Activated naive CD4-positive, alpha-beta T cell treated with anti-CD3 and anti-CD28 coated beads, Interleukin-2, amount 10 ng/mL, durations not matched to agents 7 days and 5 days (primary cell): ENCODE measurements at regions of chr11 and their contacts with region 1.

Region 1: GRCh38 chr11:64864473-64865285 is 13.7 kb downstream of the EHD1 start:
- DNase-seq: no peak
- H3K4me3 Mint-ChIP-seq: peak overlapping the region; percentile 56
- H3K27ac Mint-ChIP-seq: peak overlapping the region; percentile 100
- H3K4me1 Mint-ChIP-seq: peaks cover 94% of the 10 kb centered on the region
- H3K27me3 Mint-ChIP-seq: no peaks in the 10 kb centered on the region

Region 2: DNA sequence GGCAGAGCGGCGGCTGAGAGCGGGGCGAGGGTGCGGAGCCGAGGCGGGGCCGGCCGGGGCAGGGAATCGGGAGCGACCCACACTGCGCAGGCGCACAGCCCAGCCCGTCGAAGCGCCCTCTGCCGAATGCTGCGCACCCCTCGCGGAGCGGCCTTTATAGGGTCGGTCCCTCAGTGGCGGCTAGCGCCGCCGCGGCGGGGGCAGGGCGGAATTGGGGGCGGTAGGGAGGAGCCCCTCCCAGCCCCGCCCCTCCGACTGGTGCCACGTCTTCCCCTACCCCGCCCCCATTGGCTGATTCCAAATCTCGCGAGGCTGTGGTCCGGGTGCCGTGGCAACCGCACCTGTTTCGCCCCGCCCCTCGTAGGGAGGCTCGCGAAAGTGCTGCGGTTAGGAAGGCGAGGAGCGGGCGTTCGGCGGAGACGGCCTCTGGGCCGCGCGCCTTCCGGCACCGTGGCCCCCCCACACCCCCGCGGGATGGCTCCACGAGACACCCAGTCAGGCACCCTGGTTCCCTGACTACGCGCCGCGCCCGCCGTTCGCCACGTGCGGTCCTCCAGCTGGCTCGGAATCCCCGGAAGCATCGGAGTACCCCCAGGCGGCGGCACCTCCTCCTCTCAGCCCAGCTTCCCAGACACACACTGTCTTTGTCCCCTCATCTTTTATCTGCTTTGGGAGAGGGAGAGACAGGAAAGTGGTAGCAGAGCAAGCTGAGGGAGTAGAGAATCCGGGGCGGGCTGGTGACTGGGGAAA is 14.0 kb after region 1 on chr11 and contains the start of gene EHD1:
- CTCF ChIA-PET with region 1: interaction called, 145 read pairs
- DNase-seq: peak; percentile 100
- H3K4me3 Mint-ChIP-seq: peak within 1 kb of the TSS; percentile 99
- H3K27ac Mint-ChIP-seq: peak within 1 kb of the TSS; percentile 98
- H3K4me1 Mint-ChIP-seq: peaks cover 61% of the 10 kb centered on the region
- H3K27me3 Mint-ChIP-seq: no peaks in the 10 kb centered on the region

Region 3: GRCh38 chr11:64887757-64888405 is 23.2 kb after region 1 on chr11:
- CTCF ChIA-PET with region 1: interaction called, 145 read pairs
- DNase-seq: peak; percentile 88
- H3K4me3 Mint-ChIP-seq: peak overlapping the region; percentile 32
- H3K27ac Mint-ChIP-seq: peak overlapping the region; percentile 39
- H3K4me1 Mint-ChIP-seq: peaks cover 36% of the 10 kb centered on the region
- H3K27me3 Mint-ChIP-seq: no peaks in the 10 kb centered on the region

Region 4: GRCh38 chr11:64894070-64894796 is 29.6 kb after region 1 on chr11:
- CTCF ChIA-PET with region 1: interaction called, 11 read pairs
- DNase-seq: peak; percentile 94
- H3K4me3 Mint-ChIP-seq: no peak overlapping the region
- H3K27ac Mint-ChIP-seq: no peak overlapping the region
- H3K4me1 Mint-ChIP-seq: peaks cover 3% of the 10 kb centered on the region
- H3K27me3 Mint-ChIP-seq: no peaks in the 10 kb centered on the region